ENCODE measurements at regions of chr11 and their contacts with region 1.

Region 1: GRCh38 chr11:108393046-108393445 is 74.3 kb downstream of the C11orf65 start:
- DNase-seq: no peak
- H3K4me3 ChIP-seq: no peak overlapping the region
- H3K27ac ChIP-seq: no peak overlapping the region
- H3K4me1 ChIP-seq: no peaks in the 10 kb centered on the region
- H3K27me3 ChIP-seq: no peaks in the 10 kb centered on the region
- CTCF ChIP-seq: no peak
- POLR2A ChIP-seq: no peak

Region 2: GRCh38 chr11:109222761-109223160 is 829.7 kb after region 1 on chr11:
- intact Hi-C with region 1: loop called (anchors 5 kb)
- DNase-seq: no peak
- H3K4me3 ChIP-seq: no peak overlapping the region
- H3K27ac ChIP-seq: no peak overlapping the region
- H3K4me1 ChIP-seq: no peaks in the 10 kb centered on the region
- H3K27me3 ChIP-seq: no peaks in the 10 kb centered on the region
- CTCF ChIP-seq: no peak
- POLR2A ChIP-seq: no peak

Measured in breast epithelium (tissue), 4 donors.